Activated B cell treated with CpG ODN at 0.5 μM for 24 hours (primary cell): ENCODE measurements at regions of chr10 and their contacts with region 1.

Region 1: GRCh38 chr10:43204943-43205671 is 61.8 kb downstream of the RASGEF1A start:
- DNase-seq: peak; percentile 35
- ATAC-seq: peak; percentile 45
- H3K4me3 Mint-ChIP-seq: no peak overlapping the region
- H3K27ac Mint-ChIP-seq: no peak overlapping the region
- H3K4me1 Mint-ChIP-seq: peaks cover 7% of the 10 kb centered on the region
- H3K27me3 Mint-ChIP-seq: no peaks in the 10 kb centered on the region
- CTCF ChIP-seq: no peak

Region 2: DNA sequence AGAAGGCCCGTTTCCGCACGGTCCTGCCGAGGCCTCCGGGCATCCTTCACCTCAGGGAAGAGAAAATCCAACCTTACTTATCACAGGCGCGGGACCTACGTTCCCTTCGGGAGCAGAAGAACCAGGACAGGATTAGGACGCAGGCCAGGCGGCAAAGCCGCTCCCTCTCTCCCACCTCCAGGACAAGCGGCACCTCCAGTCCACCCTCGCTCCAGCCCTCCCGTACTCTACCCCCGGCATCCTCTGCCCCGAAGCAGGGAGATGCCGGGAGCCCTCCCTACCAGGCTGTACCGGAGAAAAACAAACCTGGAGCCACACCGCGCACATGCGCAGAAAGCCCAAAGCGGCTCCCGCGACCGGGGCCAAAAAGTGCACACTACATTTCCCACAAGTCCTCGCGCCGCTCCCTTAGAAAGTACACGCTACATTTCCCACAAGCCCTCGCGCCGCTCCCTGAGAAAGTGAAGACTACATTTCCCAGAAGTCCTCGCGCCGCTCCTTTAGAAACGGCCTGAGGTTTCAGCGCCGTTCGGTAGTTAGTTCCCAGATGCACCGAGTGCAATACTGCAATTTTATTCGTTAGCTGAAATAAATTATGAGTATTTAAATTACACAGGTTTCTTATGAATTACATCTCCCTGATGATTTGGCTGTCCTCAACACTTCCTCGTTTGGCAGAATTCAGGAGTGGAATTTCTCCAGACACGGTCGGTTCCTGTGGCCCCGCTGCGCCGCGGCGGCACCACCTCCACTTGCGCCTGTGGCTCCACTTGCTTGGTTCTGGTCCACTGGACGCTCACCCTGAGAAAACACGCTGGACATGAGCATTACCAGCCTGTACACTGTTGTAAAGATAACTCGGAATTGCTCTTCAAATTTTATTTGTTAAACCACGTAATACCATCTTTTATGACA is 652.4 kb before region 1 on chr10:
- CTCF ChIA-PET with region 1: no interaction called
- POLR2A ChIA-PET with region 1: no interaction called
- intact Hi-C with region 1: loop called (anchors 2 kb)
- DNase-seq: peak; percentile 85
- ATAC-seq: peak; percentile 97
- H3K4me3 Mint-ChIP-seq: peak overlapping the region; percentile 96
- H3K27ac Mint-ChIP-seq: peak overlapping the region; percentile 89
- H3K4me1 Mint-ChIP-seq: peaks cover 35% of the 10 kb centered on the region
- H3K27me3 Mint-ChIP-seq: no peaks in the 10 kb centered on the region
- CTCF ChIP-seq: no peak

Region 3: DNA sequence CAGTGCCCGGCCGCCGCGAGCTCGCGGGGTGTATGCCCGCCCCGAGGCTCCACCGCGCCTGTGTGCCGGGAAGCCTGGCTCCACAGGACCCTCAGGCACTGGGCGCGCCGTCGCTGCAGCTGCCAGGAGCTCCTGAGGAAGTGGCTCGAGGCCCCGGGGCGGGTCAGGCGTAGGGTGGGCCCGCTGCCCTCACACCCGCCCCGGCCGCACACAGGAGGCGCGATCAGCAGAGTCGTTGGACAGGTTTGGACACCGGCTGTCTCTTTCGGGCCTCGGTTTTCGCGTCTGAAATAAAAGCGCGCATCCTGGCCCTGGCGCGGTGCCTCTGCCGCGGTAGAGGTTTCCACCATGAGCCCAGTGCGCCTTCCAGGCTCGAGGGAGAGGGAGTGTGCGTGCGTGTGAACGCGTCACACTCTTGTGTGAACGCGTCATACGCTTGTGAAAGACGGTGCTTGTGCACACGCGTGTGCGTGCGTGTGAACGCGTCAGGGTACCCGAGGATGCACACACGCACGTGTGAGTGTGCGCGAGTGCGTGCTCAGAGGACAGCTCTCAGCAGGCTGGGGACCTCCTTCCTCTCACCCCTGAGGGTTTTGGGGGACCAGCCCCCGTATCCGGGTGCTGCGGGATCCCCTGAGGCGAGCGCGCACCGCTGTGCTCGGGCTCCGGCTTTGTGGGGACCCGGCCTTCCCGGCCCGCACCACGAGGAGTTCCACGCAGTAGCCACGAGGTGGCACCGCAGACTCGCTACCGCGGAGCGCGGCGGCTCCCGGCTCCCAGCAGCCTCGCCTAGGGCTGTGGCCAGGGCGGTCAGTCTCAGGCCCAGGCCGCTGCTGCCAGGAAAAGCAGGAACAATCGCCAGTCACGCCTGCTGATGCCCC is 338.8 kb before region 1 on chr10:
- CTCF ChIA-PET with region 1: no interaction called
- POLR2A ChIA-PET with region 1: no interaction called
- intact Hi-C with region 1: loop called (anchors 5 kb)
- DNase-seq: peak; percentile 36
- ATAC-seq: peak; percentile 45
- H3K4me3 Mint-ChIP-seq: no peak overlapping the region
- H3K27ac Mint-ChIP-seq: no peak overlapping the region
- H3K4me1 Mint-ChIP-seq: peaks cover 2% of the 10 kb centered on the region
- H3K27me3 Mint-ChIP-seq: peaks cover 24% of the 10 kb centered on the region
- CTCF ChIP-seq: no peak

Region 4: DNA sequence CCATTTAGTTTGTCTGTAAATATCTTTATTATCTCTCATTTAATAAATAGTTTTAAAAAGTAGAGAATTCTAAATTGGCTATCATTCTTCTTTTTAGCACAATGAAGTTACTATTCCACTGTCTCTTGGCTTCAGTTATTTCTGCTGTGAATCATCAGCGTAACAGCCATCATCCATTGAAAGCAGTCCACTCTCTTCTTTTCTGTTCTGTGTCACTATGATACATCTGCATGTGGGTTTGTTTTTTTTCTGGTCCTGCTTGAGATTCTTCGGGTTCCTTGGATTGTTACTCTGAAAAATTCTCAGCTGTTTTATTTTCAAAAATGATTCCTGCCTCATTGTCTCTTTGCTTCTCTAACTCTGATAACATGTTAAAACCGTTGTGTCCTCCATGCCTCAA is 14.3 kb before region 1 on chr10:
- CTCF ChIA-PET with region 1: interaction called, 7 read pairs
- POLR2A ChIA-PET with region 1: interaction called, 11 read pairs
- intact Hi-C with region 1: no loop called
- DNase-seq: no peak
- ATAC-seq: no peak
- H3K4me3 Mint-ChIP-seq: no peak overlapping the region
- H3K27ac Mint-ChIP-seq: no peak overlapping the region
- H3K4me1 Mint-ChIP-seq: no peaks in the 10 kb centered on the region
- H3K27me3 Mint-ChIP-seq: no peaks in the 10 kb centered on the region
- CTCF ChIP-seq: no peak

Region 5: GRCh38 chr10:43361986-43362839 is 157.1 kb after region 1 on chr10:
- CTCF ChIA-PET with region 1: no interaction called
- POLR2A ChIA-PET with region 1: no interaction called
- intact Hi-C with region 1: loop called (anchors 5 kb)
- DNase-seq: peak; percentile 86
- ATAC-seq: peak; percentile 98
- H3K4me3 Mint-ChIP-seq: peak overlapping the region; percentile 97
- H3K27ac Mint-ChIP-seq: peak overlapping the region; percentile 93
- H3K4me1 Mint-ChIP-seq: peaks cover 23% of the 10 kb centered on the region
- H3K27me3 Mint-ChIP-seq: no peaks in the 10 kb centered on the region
- CTCF ChIP-seq: no peak